Activated CD4-positive, alpha-beta memory T cell treated with anti-CD3 and anti-CD28 coated beads for 36 hours (primary cell): ENCODE measurements at regions of chr12 and their contacts with region 1.

Region 1: DNA sequence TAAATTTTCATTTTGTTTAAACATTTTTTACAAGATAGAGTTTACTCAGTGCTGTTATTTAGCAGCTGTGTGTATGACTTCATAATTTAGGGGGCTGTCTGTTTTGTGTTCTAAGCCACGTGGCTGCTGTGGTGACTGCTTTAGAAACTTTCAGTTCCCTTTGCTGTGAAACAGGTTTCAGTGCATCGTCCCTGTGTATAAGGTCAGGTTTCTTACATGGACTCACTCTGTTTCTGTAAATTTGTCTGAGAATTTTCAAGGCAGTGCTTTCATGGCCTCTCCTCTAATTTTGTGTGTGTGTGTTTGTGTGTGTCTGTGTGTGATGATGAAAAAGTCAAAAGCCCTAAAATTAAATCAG is 32.4 kb downstream of the BICD1 start:
- DNase-seq: peak; percentile 67
- H3K4me3 Mint-ChIP-seq: peak overlapping the region; percentile 68
- H3K27ac Mint-ChIP-seq: no peak overlapping the region
- H3K4me1 Mint-ChIP-seq: peaks cover 20% of the 10 kb centered on the region
- H3K27me3 Mint-ChIP-seq: peaks cover 2% of the 10 kb centered on the region

Region 2: DNA sequence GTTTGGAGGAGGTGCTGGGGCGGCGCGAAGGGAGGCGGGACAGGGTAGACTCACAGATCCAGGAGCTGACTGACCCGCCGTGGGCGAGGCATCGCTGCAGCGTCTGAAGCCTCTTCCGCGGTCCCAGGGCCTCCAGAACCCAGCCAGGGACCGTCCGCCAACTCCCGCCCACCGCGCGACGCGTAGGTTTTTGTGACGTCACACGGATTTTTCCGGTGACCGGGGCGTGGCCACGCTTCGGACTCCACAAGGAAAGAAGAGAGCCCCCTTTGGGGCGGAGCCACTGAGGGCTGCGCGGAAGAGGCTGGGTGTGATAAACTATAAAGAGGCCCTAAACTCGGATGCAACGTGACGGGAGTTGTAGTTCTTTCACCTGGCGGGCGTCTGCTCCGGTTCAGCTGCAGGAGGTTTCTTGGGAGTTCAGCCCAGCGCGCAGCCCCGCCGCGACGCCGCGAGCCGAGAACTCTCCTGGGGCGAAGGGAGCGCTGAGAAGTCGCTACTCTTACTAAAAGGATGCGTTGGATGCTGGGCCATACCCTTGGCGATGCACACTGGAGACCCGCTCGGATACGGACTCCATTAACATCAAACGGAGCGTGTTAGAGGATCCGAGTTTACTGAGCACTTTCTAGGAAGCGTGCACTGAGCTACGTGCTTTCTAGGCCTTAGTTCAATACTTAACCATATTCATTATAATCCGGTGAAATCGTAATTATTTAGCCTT is 410.0 kb before region 1 on chr12 and contains the start of gene AMN1:
- CTCF ChIA-PET with region 1: no interaction called
- POLR2A ChIA-PET with region 1: no interaction called
- intact Hi-C with region 1: loop called (anchors 10 kb)
- DNase-seq: peak; percentile 100
- H3K4me3 Mint-ChIP-seq: peak within 1 kb of the TSS; percentile 96
- H3K27ac Mint-ChIP-seq: peak within 1 kb of the TSS; percentile 97
- H3K4me1 Mint-ChIP-seq: peaks cover 41% of the 10 kb centered on the region
- H3K27me3 Mint-ChIP-seq: no peaks in the 10 kb centered on the region
- total RNA-seq, gene AMN1: 3.2 to 4.7 TPM

Region 3: DNA sequence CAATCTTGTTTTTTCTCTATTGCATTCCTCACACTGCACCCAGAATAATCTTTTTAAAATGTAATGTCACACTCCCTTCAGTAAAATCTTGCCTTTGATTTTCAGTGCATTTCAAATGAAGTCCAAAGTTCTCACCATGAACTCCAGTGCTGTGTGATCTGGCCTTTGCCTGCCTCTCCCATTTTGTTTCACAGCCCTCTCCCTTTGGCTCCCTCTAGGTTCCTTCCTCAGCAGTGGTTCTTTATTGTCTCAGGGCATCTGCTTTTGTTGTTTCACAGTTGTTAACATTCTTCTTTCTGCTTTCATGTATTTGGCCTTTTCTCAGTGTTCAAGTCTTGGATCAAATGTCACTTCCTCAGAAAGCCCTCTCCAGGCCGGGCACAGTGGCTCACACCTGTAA is 325.7 kb before region 1 on chr12:
- CTCF ChIA-PET with region 1: no interaction called
- POLR2A ChIA-PET with region 1: no interaction called
- intact Hi-C with region 1: loop called (anchors 1 kb)
- DNase-seq: no peak
- H3K4me3 Mint-ChIP-seq: no peak overlapping the region
- H3K27ac Mint-ChIP-seq: no peak overlapping the region
- H3K4me1 Mint-ChIP-seq: peaks cover 18% of the 10 kb centered on the region
- H3K27me3 Mint-ChIP-seq: no peaks in the 10 kb centered on the region

Region 4: GRCh38 chr12:32089586-32089985 is 49.5 kb before region 1 on chr12:
- CTCF ChIA-PET with region 1: no interaction called
- POLR2A ChIA-PET with region 1: no interaction called
- intact Hi-C with region 1: no loop called
- DNase-seq: no peak
- H3K4me3 Mint-ChIP-seq: no peak overlapping the region
- H3K27ac Mint-ChIP-seq: no peak overlapping the region
- H3K4me1 Mint-ChIP-seq: no peaks in the 10 kb centered on the region
- H3K27me3 Mint-ChIP-seq: no peaks in the 10 kb centered on the region

Region 5: GRCh38 chr12:32106517-32107358 is 32.3 kb before region 1 on chr12 and contains the start of gene BICD1:
- CTCF ChIA-PET with region 1: interaction called, 5 read pairs
- POLR2A ChIA-PET with region 1: interaction called, 10 read pairs
- intact Hi-C with region 1: loop called (anchors 1 kb)
- DNase-seq: peak; percentile 85
- H3K4me3 Mint-ChIP-seq: peak within 1 kb of the TSS; percentile 87
- H3K27ac Mint-ChIP-seq: peak within 1 kb of the TSS; percentile 82
- H3K4me1 Mint-ChIP-seq: peaks cover 23% of the 10 kb centered on the region
- H3K27me3 Mint-ChIP-seq: no peaks in the 10 kb centered on the region
- total RNA-seq, gene BICD1: 10.5 to 10.7 TPM

Region 6: GRCh38 chr12:32257695-32258496 is 118.9 kb after region 1 on chr12:
- CTCF ChIA-PET with region 1: interaction called, 4 read pairs
- POLR2A ChIA-PET with region 1: interaction called, 7 read pairs
- intact Hi-C with region 1: loop called (anchors 1 kb)
- DNase-seq: no peak
- H3K4me3 Mint-ChIP-seq: no peak overlapping the region
- H3K27ac Mint-ChIP-seq: no peak overlapping the region
- H3K4me1 Mint-ChIP-seq: peaks cover 11% of the 10 kb centered on the region
- H3K27me3 Mint-ChIP-seq: no peaks in the 10 kb centered on the region